ENCODE measurements at regions of chr16 and their contacts with region 1.

Region 1: DNA sequence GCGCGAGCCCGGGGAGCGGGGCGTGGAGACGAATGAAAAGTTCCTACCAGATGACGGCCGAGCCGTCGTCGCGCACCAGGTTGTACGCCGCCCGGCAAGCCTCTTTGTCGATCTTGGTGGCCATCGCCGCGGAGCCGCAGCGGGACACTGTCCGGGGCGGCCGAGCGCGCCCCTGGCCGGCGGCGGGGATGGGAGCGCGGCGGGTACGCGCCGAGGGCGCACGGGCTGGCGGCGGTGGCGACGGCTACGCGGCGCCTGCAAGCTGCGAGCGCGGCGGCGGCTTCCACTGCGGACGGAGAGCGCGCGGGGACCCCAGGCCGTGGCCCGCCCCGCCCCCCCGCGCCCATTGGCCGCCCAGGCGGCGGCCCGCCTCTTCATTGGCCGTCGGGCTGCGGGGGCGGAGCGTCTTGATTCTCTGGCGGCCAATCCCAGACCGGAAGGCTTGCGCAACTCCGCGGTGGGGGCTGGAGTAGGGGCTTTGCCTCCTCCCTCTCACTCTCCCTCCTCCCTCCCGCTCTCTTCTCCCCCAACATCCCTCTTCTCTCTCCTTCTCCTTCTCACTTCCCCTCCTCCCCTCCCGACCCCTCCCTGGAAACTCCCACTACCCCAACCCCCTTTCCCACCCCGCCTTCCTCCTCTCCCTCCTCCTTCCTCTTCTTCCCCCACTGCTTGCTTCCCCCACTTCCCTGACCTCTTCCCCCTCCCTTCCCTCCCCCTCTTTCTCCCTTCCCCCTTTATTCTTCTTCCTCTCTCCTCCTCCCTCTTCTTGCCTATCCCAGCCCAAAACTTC is at the start of gene COTL1:
- DNase-seq: peak; percentile 93
- H3K4me3 ChIP-seq: peak within 1 kb of the TSS; percentile 81 to 94 (median 84)
- H3K27ac ChIP-seq: peak within 1 kb of the TSS; percentile 57
- H3K4me1 ChIP-seq: peaks cover 31% of the 10 kb centered on the region
- H3K27me3 ChIP-seq: no peaks in the 10 kb centered on the region
- CTCF ChIP-seq: no peak
- POLR2A ChIP-seq: peak; percentile 93
- total RNA-seq, gene COTL1: 132 and 200 TPM in 2 replicates

Region 2: GRCh38 chr16:84414789-84415326 is 203.1 kb before region 1 on chr16:
- CTCF ChIA-PET with region 1: no interaction called
- POLR2A ChIA-PET with region 1: no interaction called
- dilution Hi-C with region 1: no loop called
- intact Hi-C with region 1: no loop called
- DNase-seq: no peak
- H3K4me3 ChIP-seq: no peak overlapping the region
- H3K27ac ChIP-seq: no peak overlapping the region
- H3K4me1 ChIP-seq: no peaks in the 10 kb centered on the region
- H3K27me3 ChIP-seq: peaks cover 0 to 3% of the 10 kb centered on the region in 2 experiments
- CTCF ChIP-seq: no peak
- POLR2A ChIP-seq: no peak

Region 3: DNA sequence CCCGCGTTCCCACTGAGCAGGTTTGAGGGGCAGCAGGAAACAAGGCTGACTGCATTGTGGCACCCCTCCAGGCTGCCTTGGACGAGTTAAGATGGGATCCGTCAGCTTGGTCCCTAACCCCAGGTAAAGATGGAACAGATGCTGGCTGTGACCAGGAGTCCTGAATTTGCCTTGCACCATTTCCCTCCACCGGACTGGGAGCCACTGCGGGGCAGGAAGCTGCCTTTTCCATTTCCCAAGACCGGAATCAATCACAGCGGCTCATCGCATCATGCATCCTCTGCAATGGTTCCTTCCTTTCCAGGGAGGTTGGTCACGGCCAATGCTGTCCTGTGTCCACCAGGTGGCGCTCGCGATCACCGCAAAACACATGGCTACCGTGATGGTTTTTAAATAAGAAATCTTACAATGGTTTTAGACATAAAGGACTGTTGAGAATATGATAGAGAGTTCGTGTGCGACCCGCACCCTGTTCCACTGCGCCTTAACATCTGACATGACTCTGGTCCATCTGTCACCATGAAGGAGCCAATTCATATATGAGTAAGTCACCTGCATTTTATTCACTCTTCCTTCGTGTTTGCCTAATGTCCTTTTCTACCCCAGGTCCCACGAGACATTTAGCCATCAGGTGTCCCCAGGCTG is 106.7 kb before region 1 on chr16:
- CTCF ChIA-PET with region 1: interaction called, 154 read pairs
- POLR2A ChIA-PET with region 1: no interaction called
- dilution Hi-C with region 1: loop called (anchors 25 kb)
- intact Hi-C with region 1: loop called (anchors 1 kb)
- DNase-seq: peak; percentile 87
- H3K4me3 ChIP-seq: no peak overlapping the region
- H3K27ac ChIP-seq: no peak overlapping the region
- H3K4me1 ChIP-seq: peaks cover 3% of the 10 kb centered on the region
- H3K27me3 ChIP-seq: no peaks in the 10 kb centered on the region
- CTCF ChIP-seq: peak; percentile 86 to 92
- POLR2A ChIP-seq: no peak

Region 4: GRCh38 chr16:84548971-84549844 is 68.8 kb before region 1 on chr16:
- CTCF ChIA-PET with region 1: interaction called, 5 read pairs
- POLR2A ChIA-PET with region 1: no interaction called
- dilution Hi-C with region 1: no loop called
- intact Hi-C with region 1: loop called (anchors 2 kb)
- DNase-seq: peak; percentile 62
- H3K4me3 ChIP-seq: no peak overlapping the region
- H3K27ac ChIP-seq: peak overlapping the region; percentile 78
- H3K4me1 ChIP-seq: peaks cover 18% of the 10 kb centered on the region
- H3K27me3 ChIP-seq: no peaks in the 10 kb centered on the region
- CTCF ChIP-seq: no peak
- POLR2A ChIP-seq: peak; percentile 34

Region 5: DNA sequence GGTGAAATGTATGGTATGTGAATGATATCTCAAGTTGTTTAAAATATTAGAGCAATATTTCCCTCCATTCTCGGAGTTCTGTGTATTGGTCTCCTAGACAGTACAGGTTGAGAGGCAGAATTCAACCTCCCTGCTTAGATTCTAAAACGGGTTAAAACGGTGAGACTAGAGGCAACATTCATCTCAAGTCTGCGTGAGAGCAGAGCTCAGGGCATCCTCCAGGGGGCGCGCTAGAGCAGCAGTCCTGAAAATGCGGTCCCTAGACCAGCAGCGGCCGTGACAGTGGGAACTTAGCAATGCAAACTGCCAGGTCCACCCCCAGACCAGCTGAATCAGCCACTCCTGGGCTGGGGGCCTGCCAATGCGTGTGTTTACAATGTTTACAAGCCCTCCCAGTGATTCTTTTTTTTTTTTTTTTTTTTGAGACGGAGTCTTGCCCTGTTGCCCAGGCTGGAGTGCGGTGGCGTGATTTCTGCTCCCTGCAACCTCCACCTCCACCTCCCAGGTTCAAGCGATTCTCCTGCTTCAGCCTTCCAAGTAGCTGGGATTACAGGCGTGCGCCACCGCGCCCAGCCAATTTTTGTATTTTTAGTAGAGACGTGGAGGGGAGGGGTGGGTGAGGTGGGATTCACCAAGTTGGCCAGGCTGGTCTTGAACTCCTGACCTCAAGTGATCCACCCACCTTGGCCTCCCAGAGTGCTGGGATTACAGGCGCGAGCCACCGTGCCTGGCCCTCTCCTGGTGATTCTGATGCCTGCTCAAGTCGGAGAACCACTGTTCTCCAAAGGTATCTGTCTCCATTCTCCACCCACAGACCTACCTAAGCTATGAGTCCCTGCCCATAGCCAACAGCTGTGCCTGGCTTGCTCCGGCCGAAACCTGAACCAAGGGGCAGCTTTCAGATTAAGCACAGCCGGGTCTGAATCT is 54.6 kb after region 1 on chr16:
- CTCF ChIA-PET with region 1: interaction called, 7 read pairs
- POLR2A ChIA-PET with region 1: no interaction called
- dilution Hi-C with region 1: no loop called
- intact Hi-C with region 1: loop called (anchors 1 kb)
- DNase-seq: peak; percentile 72
- H3K4me3 ChIP-seq: no peak overlapping the region
- H3K27ac ChIP-seq: no peak overlapping the region
- H3K4me1 ChIP-seq: no peaks in the 10 kb centered on the region
- H3K27me3 ChIP-seq: peaks cover 2 to 3% of the 10 kb centered on the region in 2 experiments
- CTCF ChIP-seq: peak; percentile 93 to 97
- POLR2A ChIP-seq: no peak

Region 6: DNA sequence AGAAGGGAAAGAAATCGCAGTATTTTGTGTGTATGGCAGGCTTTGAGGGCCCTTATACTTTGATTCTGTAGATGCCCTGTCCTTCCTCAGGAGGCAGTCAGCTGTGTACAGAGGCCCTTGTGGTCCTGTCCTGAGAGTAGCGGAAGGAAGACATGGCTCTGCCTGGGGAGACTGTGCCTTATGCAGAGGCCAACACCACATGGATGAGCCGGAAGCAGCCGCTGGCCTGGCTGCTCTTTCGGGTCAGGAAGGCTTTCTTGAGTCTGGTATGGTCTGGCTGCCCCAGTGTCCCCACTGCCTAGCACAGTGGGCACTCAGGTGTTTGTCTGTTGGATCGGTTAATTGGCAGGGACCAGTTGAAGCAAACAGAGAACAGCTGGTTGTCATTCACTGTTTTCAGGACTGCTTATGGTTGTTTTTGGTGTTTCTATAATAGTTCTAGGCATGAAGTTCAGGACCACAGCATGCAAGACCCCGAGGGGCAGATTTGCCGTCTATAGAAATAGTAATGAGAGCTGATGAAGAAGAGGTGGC is 94.2 kb after region 1 on chr16:
- CTCF ChIA-PET with region 1: no interaction called
- POLR2A ChIA-PET with region 1: no interaction called
- dilution Hi-C with region 1: no loop called
- intact Hi-C with region 1: no loop called
- DNase-seq: no peak
- H3K4me3 ChIP-seq: no peak overlapping the region
- H3K27ac ChIP-seq: no peak overlapping the region
- H3K4me1 ChIP-seq: peaks cover 4% of the 10 kb centered on the region
- H3K27me3 ChIP-seq: no peaks in the 10 kb centered on the region
- CTCF ChIP-seq: no peak
- POLR2A ChIP-seq: no peak

Region 7: GRCh38 chr16:84952335-84953189 is 334.6 kb after region 1 on chr16:
- CTCF ChIA-PET with region 1: interaction called, 17 read pairs
- POLR2A ChIA-PET with region 1: no interaction called
- dilution Hi-C with region 1: no loop called
- intact Hi-C with region 1: loop called (anchors 1 kb)
- DNase-seq: peak; percentile 87
- H3K4me3 ChIP-seq: no peak overlapping the region
- H3K27ac ChIP-seq: no peak overlapping the region
- H3K4me1 ChIP-seq: no peaks in the 10 kb centered on the region
- H3K27me3 ChIP-seq: peaks cover 0 to 2% of the 10 kb centered on the region in 2 experiments
- CTCF ChIP-seq: peak; percentile 88 to 90
- POLR2A ChIP-seq: no peak

Measured in endothelial cell of umbilical vein (primary cell).